OCI-LY7 (cell line): ENCODE measurements at regions of chr3 and their contacts with region 1.

Region 1: DNA sequence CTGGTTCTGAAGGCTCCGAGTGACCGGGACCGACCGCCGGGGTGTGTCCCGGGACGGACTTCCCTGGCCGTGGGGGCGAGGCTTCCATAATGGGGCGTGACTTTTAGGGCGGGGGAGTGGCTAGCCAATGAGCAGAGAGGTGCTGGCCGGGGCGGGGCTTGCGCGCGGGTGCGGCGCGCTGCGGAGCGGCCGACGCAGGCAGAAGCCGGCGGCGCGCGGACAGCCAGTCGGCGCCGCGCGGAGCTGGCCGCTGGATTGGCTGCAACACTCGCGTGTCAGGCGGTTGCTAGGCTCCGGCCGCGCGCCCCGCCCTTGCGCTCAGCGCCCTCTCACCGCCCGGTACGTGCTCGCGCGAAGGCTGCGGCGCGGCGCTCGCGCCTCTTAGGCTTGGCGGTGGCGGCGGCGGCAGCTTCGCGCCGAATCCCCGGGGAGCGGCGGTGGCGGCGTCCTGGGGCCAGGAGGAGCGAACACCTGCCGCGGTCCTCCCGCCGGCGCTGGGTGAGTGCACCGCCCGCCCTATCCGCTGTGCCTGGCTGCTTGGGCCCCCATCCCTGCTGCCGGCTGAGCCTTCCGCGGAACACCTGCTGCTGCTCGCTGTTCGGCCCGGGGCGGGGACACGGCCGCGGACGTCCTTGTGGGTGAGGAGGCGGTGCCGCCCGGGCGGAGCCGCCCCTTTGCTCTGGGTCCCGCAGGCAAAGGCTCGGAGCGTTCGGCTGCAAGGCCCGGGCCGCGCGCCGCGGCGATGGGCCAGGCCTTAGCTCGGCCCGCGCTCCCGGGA is at the start of gene DAG1:
- DNase-seq: peak; percentile 97
- H3K4me3 ChIP-seq: peak within 1 kb of the TSS; percentile 90
- H3K27ac ChIP-seq: peak within 1 kb of the TSS; percentile 80
- H3K4me1 ChIP-seq: peaks cover 22% of the 10 kb centered on the region
- CTCF ChIP-seq: no peak
- total RNA-seq, gene DAG1: 10.6 and 10.9 TPM in 2 replicates

Region 2: GRCh38 chr3:49428697-49429100 is 41.4 kb before region 1 on chr3:
- CTCF ChIA-PET with region 1: no interaction called
- POLR2A ChIA-PET with region 1: interaction called, 11 read pairs
- intact Hi-C with region 1: loop called (anchors 1 kb)
- DNase-seq: peak; percentile 31
- H3K4me3 ChIP-seq: peak overlapping the region; percentile 71
- H3K27ac ChIP-seq: peak overlapping the region; percentile 82
- H3K4me1 ChIP-seq: peaks cover 14% of the 10 kb centered on the region
- CTCF ChIP-seq: no peak

Region 3: GRCh38 chr3:49445381-49445780 is 24.7 kb before region 1 on chr3:
- CTCF ChIA-PET with region 1: no interaction called
- POLR2A ChIA-PET with region 1: interaction called, 13 read pairs
- intact Hi-C with region 1: no loop called
- DNase-seq: no peak
- H3K4me3 ChIP-seq: no peak overlapping the region
- H3K27ac ChIP-seq: no peak overlapping the region
- H3K4me1 ChIP-seq: peaks cover 31% of the 10 kb centered on the region
- CTCF ChIP-seq: no peak